HCT116 (cell line): ENCODE measurements at regions of chr6 and their contacts with region 1.

Region 1: DNA sequence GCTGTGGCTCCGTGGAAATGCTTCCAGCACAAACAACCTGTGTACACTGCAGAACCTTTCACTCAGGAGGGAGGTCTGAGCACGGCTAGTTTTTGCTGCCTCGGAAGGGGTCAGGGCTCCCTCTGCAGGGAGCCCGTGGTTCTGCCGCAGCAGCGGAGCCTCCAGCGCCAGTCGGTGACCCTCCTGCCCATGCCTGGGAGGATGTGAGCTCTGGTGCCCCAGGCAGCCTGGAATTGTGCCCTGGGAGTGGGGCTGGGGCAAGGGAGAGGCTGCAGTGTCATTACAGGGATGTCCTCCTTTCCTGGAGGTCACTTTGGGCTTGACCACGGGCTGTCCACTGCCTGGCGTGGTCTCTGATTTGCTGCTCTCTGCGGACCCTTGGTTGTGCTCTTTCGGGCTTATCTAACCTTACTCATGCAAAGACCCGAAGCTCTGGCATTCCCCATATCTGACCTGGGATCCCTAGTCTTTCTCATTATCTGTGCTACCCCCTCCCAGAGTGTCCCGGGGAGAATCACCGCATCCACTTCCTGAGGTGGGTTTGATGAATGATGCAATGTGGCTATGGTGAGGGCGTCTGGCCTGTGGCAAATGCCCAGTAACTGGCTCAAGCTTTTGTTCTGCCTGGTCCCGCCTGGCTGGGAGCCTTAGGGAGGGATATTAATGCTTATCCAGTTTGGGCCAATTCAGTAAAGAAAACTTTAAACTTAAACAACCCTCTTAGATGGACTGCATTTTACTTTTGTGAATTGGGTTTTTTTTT is 59.6 kb upstream of the TAGAP start:
- DNase-seq: no peak
- ATAC-seq: peak; percentile 95
- H3K4me3 ChIP-seq: no peak overlapping the region
- H3K27ac ChIP-seq: no peak overlapping the region
- H3K4me1 ChIP-seq: peaks cover 0 to 26% of the 10 kb centered on the region in 2 experiments; a peak in 2 of 4 replicates
- H3K27me3 ChIP-seq: no peaks in the 10 kb centered on the region
- CTCF ChIP-seq: peak; percentile 82 to 98 (median 94)
- POLR2A ChIP-seq: no peak
- RAD21 ChIP-seq: peak; percentile 94

Region 2: DNA sequence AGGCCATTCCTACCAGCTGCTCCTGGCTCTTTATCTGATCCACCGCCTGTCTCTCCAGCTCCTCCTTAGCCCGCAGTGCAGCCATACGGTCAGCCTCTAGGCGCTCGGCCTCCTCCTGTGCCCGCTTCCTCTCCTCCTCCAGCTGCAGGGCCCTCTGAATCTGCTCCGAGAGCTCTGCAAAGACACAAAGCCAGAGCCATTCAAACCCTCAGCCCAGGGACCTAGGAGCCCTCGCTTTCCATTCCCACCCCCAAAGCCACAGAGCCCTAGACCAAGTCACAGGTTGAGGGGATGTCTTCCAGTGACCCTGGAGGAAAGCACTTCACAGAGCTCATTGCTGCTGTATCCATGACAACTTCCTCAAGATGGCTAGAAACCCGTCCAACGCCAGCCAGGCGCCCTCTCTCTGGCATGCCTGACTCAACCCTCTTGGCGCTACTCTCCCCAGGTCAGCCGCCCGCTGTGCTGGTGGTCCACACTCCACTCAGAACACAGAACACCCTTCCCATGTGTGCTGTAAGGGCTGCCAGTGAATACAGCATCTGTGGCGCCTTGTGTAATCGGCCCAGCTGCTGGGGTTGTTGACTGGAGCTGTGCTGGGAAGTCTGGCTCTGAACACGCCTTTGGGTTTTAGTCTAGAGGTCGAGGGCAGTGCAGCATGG is 334.4 kb before region 1 on chr6:
- CTCF ChIA-PET with region 1: no interaction called
- POLR2A ChIA-PET with region 1: no interaction called
- RAD21 ChIA-PET with region 1: no interaction called
- intact Hi-C with region 1: loop called (anchors 10 kb)
- DNase-seq: no peak
- ATAC-seq: no peak
- H3K4me3 ChIP-seq: no peak overlapping the region
- H3K27ac ChIP-seq: peak overlapping the region; percentile 57
- H3K4me1 ChIP-seq: peaks cover 13 to 100% of the 10 kb centered on the region in 2 experiments
- H3K27me3 ChIP-seq: no peaks in the 10 kb centered on the region
- CTCF ChIP-seq: no peak
- POLR2A ChIP-seq: no peak
- RAD21 ChIP-seq: no peak

Region 3: DNA sequence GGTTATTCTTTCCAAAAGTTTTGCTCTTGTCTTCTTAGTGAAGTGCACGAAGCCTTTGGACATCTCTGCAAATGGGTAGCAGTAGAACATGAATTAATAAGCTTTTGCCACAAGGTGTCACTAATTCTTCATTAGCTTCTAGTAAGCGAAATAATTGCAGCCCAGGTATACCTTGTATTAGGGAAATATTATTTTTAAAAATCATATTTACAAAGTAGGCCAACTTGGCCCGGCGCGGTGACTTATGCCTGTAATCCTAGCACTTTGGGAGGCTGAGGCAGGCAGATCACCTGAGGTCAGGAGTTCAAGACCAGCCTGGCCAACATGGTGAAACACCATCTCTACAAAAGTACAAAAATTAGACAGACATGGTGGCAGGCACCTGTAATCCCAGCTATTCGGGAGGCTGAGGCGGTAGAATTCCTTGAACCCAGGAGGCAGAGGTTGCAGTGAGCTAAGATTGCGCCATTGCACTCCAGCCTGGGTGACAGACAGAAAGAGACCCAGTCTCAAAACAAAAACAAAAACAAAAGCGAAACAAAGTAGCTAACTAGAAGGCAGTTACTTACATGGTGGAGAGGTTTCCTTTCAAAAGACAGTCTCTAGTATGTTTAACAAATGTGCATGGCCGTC is 95.6 kb before region 1 on chr6:
- CTCF ChIA-PET with region 1: interaction called, 13 read pairs
- POLR2A ChIA-PET with region 1: no interaction called
- RAD21 ChIA-PET with region 1: interaction called in 1 of 2 experiments, 4 read pairs
- intact Hi-C with region 1: loop called (anchors 2 kb)
- DNase-seq: no peak
- ATAC-seq: peak; percentile 81
- H3K4me3 ChIP-seq: no peak overlapping the region
- H3K27ac ChIP-seq: no peak overlapping the region
- H3K4me1 ChIP-seq: peaks cover 0 to 6% of the 10 kb centered on the region in 2 experiments; a peak in 1 of 4 replicates
- H3K27me3 ChIP-seq: no peaks in the 10 kb centered on the region
- CTCF ChIP-seq: peak in 2 of 3 experiments; percentile 39 to 53; a peak in 4 of 6 replicates
- POLR2A ChIP-seq: no peak
- RAD21 ChIP-seq: no peak

Region 4: DNA sequence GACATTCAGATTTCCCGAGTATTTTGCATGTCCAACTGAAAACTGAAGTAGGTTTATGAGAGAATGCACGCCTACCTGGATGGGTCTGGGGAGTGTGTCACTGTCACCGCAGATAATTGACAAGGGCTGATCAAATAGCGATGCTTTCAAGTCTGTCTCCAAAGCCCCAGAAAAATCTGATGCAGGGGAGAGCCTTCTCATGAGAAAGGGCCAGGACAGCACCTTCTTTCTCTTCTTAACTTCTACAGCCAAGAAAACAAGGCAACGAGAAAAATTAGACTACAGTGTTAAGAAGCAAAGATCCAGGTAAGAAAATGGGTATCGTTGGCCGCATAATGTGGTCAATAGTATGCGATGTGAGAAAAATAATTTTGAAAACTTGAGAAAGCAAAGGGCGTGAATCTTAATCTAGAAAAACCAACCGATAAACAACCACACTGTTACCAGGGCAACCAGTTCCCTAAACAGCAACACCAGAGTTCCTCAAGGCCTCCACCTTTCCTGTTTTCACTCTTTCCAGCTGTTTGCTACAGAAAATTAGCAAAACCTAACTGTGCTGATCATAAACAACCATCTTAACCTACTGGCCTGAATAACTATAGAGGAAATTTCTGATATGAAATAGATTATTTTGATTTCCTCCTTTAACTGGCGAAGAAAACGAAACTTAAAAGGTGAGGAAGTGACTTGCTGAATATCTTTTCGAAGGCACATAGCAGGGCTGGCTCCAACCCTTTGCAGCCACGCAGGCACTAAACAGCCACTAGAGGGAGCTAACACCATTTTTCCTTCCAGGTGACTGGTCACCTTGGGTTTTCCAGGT is 62.1 kb before region 1 on chr6:
- CTCF ChIA-PET with region 1: interaction called, 15 read pairs
- POLR2A ChIA-PET with region 1: interaction called, 4 read pairs
- RAD21 ChIA-PET with region 1: no interaction called
- intact Hi-C with region 1: loop called (anchors 1 kb)
- DNase-seq: peak; percentile 68
- ATAC-seq: peak; percentile 99
- H3K4me3 ChIP-seq: 0 out of 4 replicates have a peak overlapping the region, but pooled peaks of 1 of the 2 experiments have one; percentile 10
- H3K27ac ChIP-seq: no peak overlapping the region
- H3K4me1 ChIP-seq: peaks cover 0 to 11% of the 10 kb centered on the region in 2 experiments; a peak in 2 of 4 replicates
- H3K27me3 ChIP-seq: no peaks in the 10 kb centered on the region
- CTCF ChIP-seq: peak; percentile 86 to 99 (median 98)
- POLR2A ChIP-seq: no peak
- RAD21 ChIP-seq: peak; percentile 82